Breast epithelium (tissue), 4 donors: ENCODE measurements at regions of chr17 and their contacts with region 1.

Region 1: DNA sequence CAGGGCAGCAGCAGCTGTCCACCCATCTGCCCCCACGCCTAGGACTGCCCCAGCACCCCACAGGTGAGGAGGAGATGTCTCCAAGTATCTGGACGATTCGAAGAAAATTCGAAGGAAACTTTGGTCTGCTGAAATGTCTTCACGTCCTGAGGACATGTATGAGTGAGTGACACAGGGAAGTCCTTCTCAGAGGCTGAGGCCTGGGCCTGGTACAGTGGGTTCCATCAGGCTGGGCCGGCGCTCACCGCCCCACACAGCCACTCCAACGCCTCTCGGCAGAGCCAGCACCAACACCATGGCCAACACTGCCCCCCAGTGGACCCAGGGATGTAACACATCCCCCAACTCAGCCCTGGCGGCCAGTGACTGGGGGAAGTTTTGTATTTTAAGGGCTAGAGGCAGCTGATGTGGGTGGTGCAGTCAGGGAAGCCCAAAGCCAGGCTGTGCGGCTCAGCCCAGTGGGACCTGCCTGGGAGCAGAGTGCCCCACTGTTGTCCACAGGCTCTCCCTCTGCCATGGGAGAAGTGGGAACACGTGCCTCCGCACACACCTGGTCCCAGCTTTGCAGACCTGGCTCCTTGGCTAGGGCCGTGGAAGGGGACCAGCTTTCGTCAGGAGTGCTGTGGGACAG is 55.8 kb upstream of the FASN start:
- DNase-seq: peak; percentile 75 to 82
- H3K4me3 ChIP-seq: no peak overlapping the region
- H3K27ac ChIP-seq: peak overlapping the region; percentile 87 to 97
- H3K4me1 ChIP-seq: peaks cover 5 to 6% of the 10 kb centered on the region in 2 donors
- H3K27me3 ChIP-seq: no peaks in the 10 kb centered on the region
- CTCF ChIP-seq: peak; percentile 92 to 98 (median 98)
- POLR2A ChIP-seq: no peak

Region 2: DNA sequence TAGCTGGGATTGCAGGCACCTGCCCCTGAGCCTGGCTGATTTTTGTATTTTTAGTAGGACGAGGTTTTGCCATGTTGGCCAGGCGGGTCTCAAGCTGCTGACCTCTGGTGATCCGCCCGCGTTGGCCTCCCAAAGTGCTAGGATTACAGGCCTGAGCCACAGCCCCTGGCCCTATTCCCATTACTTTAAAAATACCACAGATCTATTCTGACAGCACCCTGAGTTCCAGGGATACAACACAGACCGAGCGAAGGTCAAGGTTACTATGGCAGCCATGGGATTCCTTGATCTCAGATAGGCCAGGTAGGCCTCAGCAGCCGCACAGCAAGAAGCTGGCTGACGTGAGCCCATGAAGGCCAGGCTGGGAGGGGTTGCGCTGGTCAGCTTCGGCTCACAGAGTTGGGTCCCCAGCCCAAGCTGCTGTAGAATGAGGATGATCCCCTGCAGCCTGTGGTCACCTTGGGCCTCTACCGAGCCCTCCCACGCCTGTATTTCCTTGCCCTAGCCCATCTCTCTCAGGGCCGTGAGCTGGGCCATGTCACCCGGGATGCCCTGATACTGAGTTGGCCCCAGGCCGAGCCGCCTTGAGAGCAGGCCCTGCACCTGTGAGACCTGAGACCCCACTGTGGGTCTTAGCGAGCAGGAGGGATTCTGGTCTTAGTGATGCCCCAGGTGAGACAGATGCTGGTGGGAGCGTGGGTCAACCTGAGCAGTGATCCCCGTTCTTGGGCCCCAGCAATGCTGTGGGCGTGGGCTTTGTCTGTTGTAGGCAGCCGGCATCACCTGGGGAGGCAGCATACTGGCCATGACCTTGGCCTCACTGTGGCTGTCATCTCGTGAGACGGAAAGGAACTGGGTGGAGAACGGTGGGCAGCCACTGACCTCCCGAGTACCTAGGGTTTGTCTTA is 1910.1 kb before region 1 on chr17:
- intact Hi-C with region 1: no loop called
- DNase-seq: no peak
- H3K4me3 ChIP-seq: no peak overlapping the region
- H3K27ac ChIP-seq: no peak overlapping the region
- H3K4me1 ChIP-seq: no peaks in the 10 kb centered on the region
- H3K27me3 ChIP-seq: no peaks in the 10 kb centered on the region
- CTCF ChIP-seq: no peak
- POLR2A ChIP-seq: no peak

Region 3: DNA sequence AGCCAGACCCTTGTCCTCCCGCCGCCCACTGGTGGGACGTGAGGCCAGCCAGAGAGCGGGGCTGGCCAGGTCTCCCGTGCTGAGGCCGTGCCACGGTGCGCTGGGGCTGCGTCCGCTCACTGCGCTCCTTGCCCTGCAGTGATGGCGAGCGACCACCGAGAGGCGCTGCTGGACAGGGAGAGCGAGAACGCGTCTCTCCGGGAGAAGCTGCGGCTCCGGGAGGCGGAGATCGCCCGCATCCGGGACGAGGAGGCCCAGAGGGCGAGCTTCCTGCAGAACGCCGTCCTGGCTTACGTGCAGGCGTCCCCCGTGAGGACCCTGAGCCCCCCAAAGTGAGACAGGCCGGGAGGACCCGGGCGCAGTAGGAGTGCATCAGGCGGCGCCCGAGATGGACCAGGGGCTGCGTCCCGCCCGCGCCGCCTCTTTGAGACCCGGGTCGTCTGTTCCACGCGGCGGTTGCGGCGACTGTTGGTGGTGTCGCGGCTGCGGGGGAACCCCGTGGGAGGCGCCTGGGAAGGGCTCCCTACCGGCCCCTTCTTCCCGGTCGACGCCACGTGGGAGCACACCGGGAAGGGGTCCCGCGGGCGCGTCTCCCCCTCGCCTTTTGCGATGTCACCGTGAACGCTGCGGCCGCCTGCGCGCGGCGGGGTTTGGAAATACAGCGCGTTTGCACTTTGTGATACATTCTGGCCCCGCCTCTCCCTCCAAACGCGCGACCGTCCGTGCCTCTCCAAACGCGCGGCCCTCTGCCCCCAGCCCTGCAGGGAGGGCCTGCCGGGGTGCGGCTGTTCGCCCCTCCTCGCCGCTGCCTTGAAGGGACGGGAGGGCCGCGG is 123.2 kb before region 1 on chr17:
- intact Hi-C with region 1: loop called (anchors 5 kb)
- DNase-seq: peak; percentile 78 to 89
- H3K4me3 ChIP-seq: peak overlapping the region; percentile 30 to 90 (median 59)
- H3K27ac ChIP-seq: peak overlapping the region; percentile 61 to 83
- H3K4me1 ChIP-seq: peaks cover 4 to 5% of the 10 kb centered on the region in 2 donors
- H3K27me3 ChIP-seq: no peaks in the 10 kb centered on the region
- CTCF ChIP-seq: peak; percentile 83 to 97 (median 97)
- POLR2A ChIP-seq: no peak

Region 4: GRCh38 chr17:82105882-82106687 is 47.8 kb before region 1 on chr17:
- intact Hi-C with region 1: loop called (anchors 1 kb)
- DNase-seq: peak; percentile 63 to 88
- H3K4me3 ChIP-seq: peak overlapping the region; percentile 17 to 57 (median 32)
- H3K27ac ChIP-seq: peak overlapping the region; percentile 95 to 97
- H3K4me1 ChIP-seq: peaks cover 33 to 45% of the 10 kb centered on the region in 2 donors
- H3K27me3 ChIP-seq: no peaks in the 10 kb centered on the region
- CTCF ChIP-seq: peak; percentile 28 to 48 (median 31)
- POLR2A ChIP-seq: no peak